GM12878 (cell line): ENCODE measurements at regions of chr16 and their contacts with region 1.

Region 1: GRCh38 chr16:25014500-25015147 is 545 bp downstream of the ARHGAP17 start:
- DNase-seq: no peak
- ATAC-seq: peak; percentile 9
- H3K4me3 ChIP-seq: peak overlapping the region; percentile 98
- H3K27ac ChIP-seq: peak overlapping the region; percentile 94
- H3K4me1 ChIP-seq: peaks cover 43% of the 10 kb centered on the region
- H3K27me3 ChIP-seq: no peaks in the 10 kb centered on the region
- CTCF ChIP-seq: no peak
- EP300 ChIP-seq: no peak
- POLR2A ChIP-seq: no peak
- RAD21 ChIP-seq: no peak

Region 2: GRCh38 chr16:23742766-23743165 is 1271.9 kb before region 1 on chr16:
- CTCF ChIA-PET with region 1: no interaction called
- POLR2A ChIA-PET with region 1: no interaction called
- RAD21 ChIA-PET with region 1: no interaction called
- SMC1A ChIA-PET with region 1: no interaction called
- in situ Hi-C with region 1: no loop called
- intact Hi-C with region 1: no loop called
- DNase-seq: no peak
- ATAC-seq: no peak
- H3K4me3 ChIP-seq: no peak overlapping the region
- H3K27ac ChIP-seq: no peak overlapping the region
- H3K4me1 ChIP-seq: no peaks in the 10 kb centered on the region
- H3K27me3 ChIP-seq: no peaks in the 10 kb centered on the region; a peak in 2 of 4 replicates
- CTCF ChIP-seq: no peak
- EP300 ChIP-seq: no peak
- POLR2A ChIP-seq: no peak
- RAD21 ChIP-seq: no peak

Region 3: DNA sequence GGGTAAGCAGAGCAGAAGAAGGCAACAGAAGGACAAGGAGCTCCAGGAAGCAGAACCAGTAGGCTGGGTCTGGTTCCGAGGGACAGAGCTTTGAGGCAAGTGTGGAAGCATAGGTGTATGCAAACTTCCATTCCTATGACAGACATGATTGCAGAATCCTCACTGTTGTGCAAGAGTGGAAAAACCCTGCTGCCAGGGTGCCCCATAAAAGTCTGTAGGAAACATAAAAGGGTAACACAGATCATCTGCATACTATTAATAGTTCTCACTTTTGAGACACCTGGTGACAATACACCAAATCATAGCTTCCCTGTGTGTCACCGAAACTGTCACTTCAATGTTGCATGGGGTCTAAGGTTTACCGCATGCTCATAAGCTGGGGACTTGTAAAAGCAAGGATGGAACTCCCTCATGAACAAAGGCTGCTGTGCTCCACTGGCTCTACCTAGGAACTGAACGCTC is 39.2 kb before region 1 on chr16:
- CTCF ChIA-PET with region 1: interaction called, 4 read pairs
- POLR2A ChIA-PET with region 1: interaction called, 39 read pairs
- RAD21 ChIA-PET with region 1: interaction called, 16 read pairs
- SMC1A ChIA-PET with region 1: interaction called, 68 read pairs
- in situ Hi-C with region 1: no loop called
- intact Hi-C with region 1: loop called (anchors 2 kb)
- DNase-seq: peak; percentile 76
- ATAC-seq: peak; percentile 77
- H3K4me3 ChIP-seq: peak overlapping the region; percentile 22; the same call in 1 of the 2 replicates
- H3K27ac ChIP-seq: peak overlapping the region; percentile 74
- H3K4me1 ChIP-seq: peaks cover 77% of the 10 kb centered on the region
- H3K27me3 ChIP-seq: no peaks in the 10 kb centered on the region
- CTCF ChIP-seq: no peak
- EP300 ChIP-seq: peak; percentile 71; a peak in 2 of 4 replicates
- POLR2A ChIP-seq: no peak
- RAD21 ChIP-seq: no peak

Region 4: DNA sequence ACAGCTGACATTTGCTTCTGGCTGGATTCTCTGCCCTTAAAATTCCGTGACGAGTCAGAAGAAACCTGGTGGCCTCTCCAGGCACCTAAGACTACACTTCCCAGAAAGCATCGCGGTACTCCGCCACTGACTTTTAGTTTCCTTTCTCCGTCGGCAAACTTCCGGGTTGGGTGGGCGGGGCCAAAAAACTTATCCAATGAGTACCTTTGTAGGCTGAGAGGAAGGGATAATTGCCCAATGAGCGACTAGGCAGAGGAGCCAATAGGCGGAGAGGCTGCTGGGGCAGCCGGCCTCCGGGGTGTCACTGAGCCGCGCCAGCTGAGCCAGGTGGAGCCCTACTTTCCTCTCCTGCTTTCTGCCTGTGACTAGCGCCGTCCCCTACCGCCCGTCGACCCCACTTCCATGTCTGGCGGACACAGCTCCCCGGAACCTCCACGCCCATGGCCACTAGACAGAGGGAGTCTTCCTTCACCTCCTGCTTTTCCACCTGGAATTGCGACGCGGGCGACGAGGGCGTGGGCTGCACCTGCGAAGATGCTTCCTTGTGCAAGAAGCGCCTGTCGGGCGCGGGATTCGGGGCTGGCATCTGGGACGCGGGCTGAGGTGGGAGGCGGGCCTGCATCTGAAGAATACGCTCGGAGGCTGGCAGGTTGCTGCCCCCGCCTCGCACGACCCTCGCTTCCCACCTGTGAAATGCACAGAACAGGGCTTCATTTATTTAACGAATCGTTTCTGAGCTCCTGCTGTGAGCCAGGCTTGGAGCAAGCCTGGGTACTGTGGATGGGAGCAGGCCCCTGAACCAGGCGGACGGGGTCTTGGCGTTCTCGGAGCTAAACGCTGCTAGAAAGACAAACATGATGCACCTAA is 17.1 kb after region 1 on chr16:
- CTCF ChIA-PET with region 1: interaction called, 7 read pairs
- POLR2A ChIA-PET with region 1: interaction called, 118 read pairs
- RAD21 ChIA-PET with region 1: interaction called, 63 read pairs
- SMC1A ChIA-PET with region 1: interaction called, 161 read pairs
- in situ Hi-C with region 1: no loop called
- intact Hi-C with region 1: loop called (anchors 1 kb)
- DNase-seq: peak; percentile 96
- ATAC-seq: peak; percentile 98
- H3K4me3 ChIP-seq: peak overlapping the region; percentile 98
- H3K27ac ChIP-seq: peak overlapping the region; percentile 91
- H3K4me1 ChIP-seq: peaks cover 16% of the 10 kb centered on the region
- H3K27me3 ChIP-seq: no peaks in the 10 kb centered on the region
- CTCF ChIP-seq: no peak
- EP300 ChIP-seq: no peak
- POLR2A ChIP-seq: peak; percentile 85
- RAD21 ChIP-seq: no peak

Region 5: GRCh38 chr16:25045696-25046381 is 31.2 kb after region 1 on chr16:
- CTCF ChIA-PET with region 1: interaction called, 39 read pairs
- POLR2A ChIA-PET with region 1: interaction called, 92 read pairs
- RAD21 ChIA-PET with region 1: interaction called, 30 read pairs
- SMC1A ChIA-PET with region 1: interaction called, 161 read pairs
- in situ Hi-C with region 1: no loop called
- intact Hi-C with region 1: loop called (anchors 2 kb)
- DNase-seq: no peak
- ATAC-seq: no peak
- H3K4me3 ChIP-seq: no peak overlapping the region
- H3K27ac ChIP-seq: peak overlapping the region; percentile 45; the same call in 1 of the 2 replicates
- H3K4me1 ChIP-seq: peaks cover 70% of the 10 kb centered on the region
- H3K27me3 ChIP-seq: no peaks in the 10 kb centered on the region
- CTCF ChIP-seq: no peak
- EP300 ChIP-seq: peak in 1 of 2 experiments; percentile 35; a peak in 1 of 4 replicates
- POLR2A ChIP-seq: no peak
- RAD21 ChIP-seq: no peak

Region 6: DNA sequence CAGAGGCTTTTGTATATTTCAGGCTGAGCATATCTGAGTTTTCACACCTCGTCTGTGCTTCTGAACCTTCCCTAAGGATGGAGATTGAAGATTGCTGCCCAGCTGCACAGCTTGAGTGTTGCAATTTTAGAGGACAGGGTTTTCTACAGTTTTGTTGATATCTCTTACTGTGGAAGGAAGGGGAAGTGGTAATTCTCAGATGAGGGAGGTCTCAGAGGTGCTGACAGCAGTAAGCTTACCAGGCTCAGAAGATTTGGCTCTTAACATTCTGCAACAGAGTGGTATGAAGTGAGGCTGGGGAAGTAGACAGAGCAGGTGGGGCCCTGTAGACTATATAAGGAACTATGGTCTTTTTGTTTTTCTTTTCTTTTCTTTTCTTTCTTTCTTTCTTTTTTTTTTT is 46.3 kb after region 1 on chr16:
- CTCF ChIA-PET with region 1: no interaction called
- POLR2A ChIA-PET with region 1: interaction called, 7 read pairs
- RAD21 ChIA-PET with region 1: interaction called, 4 read pairs
- SMC1A ChIA-PET with region 1: interaction called, 11 read pairs
- in situ Hi-C with region 1: no loop called
- intact Hi-C with region 1: no loop called
- DNase-seq: no peak
- ATAC-seq: peak; percentile 69
- H3K4me3 ChIP-seq: no peak overlapping the region
- H3K27ac ChIP-seq: no peak overlapping the region
- H3K4me1 ChIP-seq: peaks cover 18% of the 10 kb centered on the region
- H3K27me3 ChIP-seq: no peaks in the 10 kb centered on the region
- CTCF ChIP-seq: no peak
- EP300 ChIP-seq: no peak
- POLR2A ChIP-seq: no peak
- RAD21 ChIP-seq: no peak